GM10248 (cell line): ENCODE measurements at regions of chr1 and their contacts with region 1.

Region 1: GRCh38 chr1:25148673-25149300 is 83.5 kb downstream of the SYF2 start:
- DNase-seq: peak; percentile 51
- CTCF ChIP-seq: peak; percentile 63

Region 2: DNA sequence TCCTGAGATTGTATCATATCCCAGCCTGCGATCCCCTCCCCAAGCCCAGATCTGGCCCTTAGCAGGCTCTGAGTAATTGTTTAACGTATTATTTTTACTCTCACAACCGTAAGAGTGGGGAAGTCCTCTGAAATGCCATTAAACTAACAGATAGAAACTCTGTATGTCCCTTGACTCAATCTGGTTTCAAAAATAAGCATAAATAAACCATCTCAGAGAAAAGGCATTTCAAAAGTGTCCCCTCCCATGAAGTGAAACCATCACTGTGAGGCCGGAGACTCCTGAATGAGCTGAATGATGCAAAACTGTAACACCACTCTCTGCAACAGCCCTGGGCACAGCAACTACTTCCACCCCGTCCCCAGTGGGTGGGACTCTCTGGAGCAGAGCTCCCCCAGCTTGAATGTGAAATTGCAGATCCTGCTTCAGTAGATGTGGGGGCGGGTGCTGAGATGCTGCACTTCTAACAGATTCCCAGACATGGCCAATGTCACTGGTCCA is 20.6 kb before region 1 on chr1:
- CTCF ChIA-PET with region 1: interaction called, 17 read pairs
- POLR2A ChIA-PET with region 1: no interaction called
- DNase-seq: peak; percentile 68
- CTCF ChIP-seq: no peak

Region 3: DNA sequence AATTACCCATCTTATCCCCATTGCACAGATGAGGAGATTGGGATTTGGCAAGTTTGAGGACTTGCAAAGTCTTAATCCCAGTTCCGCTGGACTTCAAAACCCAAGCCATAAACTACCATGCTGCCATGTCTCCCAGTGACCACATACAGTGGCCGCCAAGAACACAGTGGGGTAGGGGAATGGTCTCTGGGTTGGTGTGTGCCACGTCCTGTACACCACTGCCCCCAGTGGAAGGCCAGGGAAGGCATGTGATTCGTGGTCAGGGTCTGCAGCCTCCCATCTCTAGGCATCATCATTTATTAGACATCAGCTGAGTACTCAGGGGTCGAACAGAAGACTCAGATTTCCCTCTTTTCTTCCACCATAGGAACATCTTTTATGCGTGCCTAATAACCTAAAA is 543.8 kb after region 1 on chr1:
- CTCF ChIA-PET with region 1: no interaction called
- POLR2A ChIA-PET with region 1: no interaction called
- DNase-seq: peak; percentile 50
- CTCF ChIP-seq: peak; percentile 46